ENCODE measurements at regions of chr12 and their contacts with region 1.

Region 1: GRCh38 chr12:101051901-101052550 is 158.0 kb downstream of the SLC5A8 start:
- DNase-seq: no peak
- H3K4me3 ChIP-seq: no peak overlapping the region
- H3K27ac ChIP-seq: peak overlapping the region; percentile 39 to 45
- H3K4me1 ChIP-seq: peaks cover 0 to 8% of the 10 kb centered on the region in 2 donors
- H3K27me3 ChIP-seq: no peaks in the 10 kb centered on the region
- CTCF ChIP-seq: no peak

Region 2: GRCh38 chr12:101021909-101022388 is 30.1 kb before region 1 on chr12:
- intact Hi-C with region 1: loop called (anchors 2 kb)
- DNase-seq: no peak
- H3K4me3 ChIP-seq: no peak overlapping the region
- H3K27ac ChIP-seq: peak overlapping the region in 1 of 2 donors; percentile 4
- H3K4me1 ChIP-seq: peaks cover 0 to 7% of the 10 kb centered on the region in 2 donors
- H3K27me3 ChIP-seq: no peaks in the 10 kb centered on the region
- CTCF ChIP-seq: no peak